Activated T-helper 1 cell treated with anti-CD3 and anti-CD28 coated beads, Interleukin-12 subunit alpha, Interleukin-12 subunit beta, Interleukin-2, Interleukin-4 antibody, amounts not matched to agents 30 ng/mL and 10 ng/mL and 1 ng/mL, durations not matched to agents 14 hours and 24 hours and 36 hours (primary cell): ENCODE measurements at regions of chr17 and their contacts with region 1.

Region 1: GRCh38 chr17:32349854-32350665 is at the start of gene ZNF207:
- DNase-seq: peak; percentile 94
- H3K4me3 Mint-ChIP-seq: peak within 1 kb of the TSS; percentile 99
- H3K27ac Mint-ChIP-seq: peak within 1 kb of the TSS; percentile 99
- H3K4me1 Mint-ChIP-seq: peaks cover 46% of the 10 kb centered on the region
- H3K27me3 Mint-ChIP-seq: no peaks in the 10 kb centered on the region
- total RNA-seq, gene ZNF207: 268 and 275 TPM in 2 replicates

Region 2: DNA sequence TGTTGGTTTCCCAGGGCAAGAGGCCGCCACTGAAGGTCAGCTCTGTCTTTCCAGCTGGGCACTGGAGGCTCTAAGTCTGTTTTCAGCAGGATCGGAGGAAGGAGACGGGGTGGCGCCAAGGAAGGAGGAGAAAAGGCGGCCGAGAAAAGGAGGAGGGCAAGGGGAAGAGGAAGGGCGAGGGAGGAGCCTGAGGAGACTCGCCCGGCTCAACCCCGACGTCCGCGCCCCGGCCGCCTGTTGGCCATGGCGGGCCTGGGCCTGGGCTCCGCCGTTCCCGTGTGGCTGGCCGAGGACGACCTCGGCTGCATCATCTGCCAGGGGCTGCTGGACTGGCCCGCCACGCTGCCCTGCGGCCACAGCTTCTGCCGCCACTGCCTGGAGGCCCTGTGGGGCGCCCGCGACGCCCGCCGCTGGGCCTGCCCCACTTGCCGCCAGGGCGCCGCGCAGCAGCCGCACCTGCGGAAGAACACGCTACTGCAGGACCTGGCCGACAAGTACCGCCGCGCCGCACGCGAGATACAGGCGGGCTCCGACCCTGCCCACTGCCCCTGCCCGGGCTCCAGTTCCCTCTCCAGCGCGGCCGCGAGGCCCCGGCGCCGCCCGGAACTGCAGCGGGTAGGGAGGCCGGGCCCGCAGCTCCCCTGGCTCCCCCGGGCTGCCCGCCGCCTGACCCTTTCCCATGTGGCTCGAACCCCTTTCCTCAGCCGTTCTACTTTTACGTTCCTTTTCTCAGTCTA is 1379.1 kb before region 1 on chr17 and contains the start of gene RNF135:
- intact Hi-C with region 1: loop called (anchors 10 kb)
- DNase-seq: peak; percentile 62
- H3K4me3 Mint-ChIP-seq: peak within 1 kb of the TSS; percentile 98
- H3K27ac Mint-ChIP-seq: peak within 1 kb of the TSS; percentile 96
- H3K4me1 Mint-ChIP-seq: peaks cover 22% of the 10 kb centered on the region
- H3K27me3 Mint-ChIP-seq: no peaks in the 10 kb centered on the region
- total RNA-seq, gene RNF135: 8.6 and 10.6 TPM in 2 replicates

Region 3: DNA sequence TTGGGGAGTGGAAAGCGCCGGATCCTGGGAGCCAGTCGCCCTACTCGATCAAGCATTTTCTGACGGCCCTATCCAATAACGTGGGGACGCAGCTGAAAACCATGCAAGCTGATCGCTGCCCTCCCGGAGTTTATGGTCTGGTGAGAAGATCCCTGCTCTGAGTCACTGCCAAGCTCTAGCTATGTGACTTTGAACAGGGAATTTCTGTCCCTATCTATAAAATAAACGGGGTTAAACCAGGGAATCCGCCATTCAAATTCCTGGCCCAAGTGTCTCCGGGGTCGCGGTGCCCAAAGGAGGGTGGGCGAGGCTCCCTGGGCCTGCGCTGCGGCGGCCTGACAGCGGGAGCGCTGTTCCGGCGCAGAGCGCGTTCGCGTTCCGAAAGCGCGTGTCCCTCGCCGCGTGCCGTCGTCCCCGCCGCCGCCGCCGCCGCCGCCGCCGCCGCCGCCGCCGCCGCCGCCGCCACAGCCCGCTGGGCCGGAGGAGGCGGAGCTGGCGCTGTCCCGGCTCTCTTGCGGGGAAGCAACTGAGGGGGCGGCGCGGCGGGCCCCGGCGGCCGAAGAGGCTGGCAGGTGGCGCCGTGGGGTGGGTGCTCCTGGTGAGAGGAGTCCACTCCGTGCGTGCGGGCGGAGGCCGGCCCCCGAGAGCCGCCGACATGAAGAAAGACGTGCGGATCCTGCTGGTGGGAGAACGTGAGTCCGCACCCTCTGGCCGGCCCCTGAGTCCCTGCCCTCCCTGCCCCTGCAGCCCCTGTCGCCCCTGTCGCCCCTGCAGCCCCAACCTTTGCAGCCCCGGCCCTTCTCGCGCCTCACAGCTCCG is 207.8 kb before region 1 on chr17 and contains the start of gene RHOT1:
- intact Hi-C with region 1: loop called (anchors 5 kb)
- DNase-seq: peak; percentile 76
- H3K4me3 Mint-ChIP-seq: peak within 1 kb of the TSS; percentile 96
- H3K27ac Mint-ChIP-seq: peak within 1 kb of the TSS; percentile 92
- H3K4me1 Mint-ChIP-seq: peaks cover 25% of the 10 kb centered on the region
- H3K27me3 Mint-ChIP-seq: no peaks in the 10 kb centered on the region
- total RNA-seq, gene RHOT1: 25.9 and 27.2 TPM in 2 replicates

Region 4: GRCh38 chr17:32191306-32191705 is 158.8 kb before region 1 on chr17:
- intact Hi-C with region 1: no loop called
- DNase-seq: no peak
- H3K4me3 Mint-ChIP-seq: no peak overlapping the region
- H3K27ac Mint-ChIP-seq: no peak overlapping the region
- H3K4me1 Mint-ChIP-seq: no peaks in the 10 kb centered on the region
- H3K27me3 Mint-ChIP-seq: no peaks in the 10 kb centered on the region

Region 5: DNA sequence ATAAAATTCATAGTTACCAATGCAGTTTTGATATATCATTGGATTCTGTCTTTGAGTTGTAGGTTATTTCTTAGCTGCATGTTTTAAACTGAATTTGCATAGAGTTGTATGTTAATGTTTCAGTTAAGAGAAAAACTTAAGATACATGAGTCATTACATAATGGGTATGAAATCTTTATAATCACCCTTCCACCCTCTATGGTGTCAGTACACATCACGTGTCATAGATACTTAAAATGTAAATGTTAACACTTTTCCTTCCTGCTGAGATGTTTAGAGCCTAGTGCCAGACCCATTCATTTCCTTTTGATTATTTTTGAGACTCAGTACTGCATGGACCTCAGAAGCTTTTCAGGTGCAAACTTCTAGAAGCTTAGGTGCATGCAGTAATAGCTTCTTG is 20.4 kb after region 1 on chr17:
- intact Hi-C with region 1: loop called (anchors 2 kb)
- DNase-seq: no peak
- H3K4me3 Mint-ChIP-seq: no peak overlapping the region
- H3K27ac Mint-ChIP-seq: no peak overlapping the region
- H3K4me1 Mint-ChIP-seq: peaks cover 23% of the 10 kb centered on the region
- H3K27me3 Mint-ChIP-seq: no peaks in the 10 kb centered on the region

Region 6: DNA sequence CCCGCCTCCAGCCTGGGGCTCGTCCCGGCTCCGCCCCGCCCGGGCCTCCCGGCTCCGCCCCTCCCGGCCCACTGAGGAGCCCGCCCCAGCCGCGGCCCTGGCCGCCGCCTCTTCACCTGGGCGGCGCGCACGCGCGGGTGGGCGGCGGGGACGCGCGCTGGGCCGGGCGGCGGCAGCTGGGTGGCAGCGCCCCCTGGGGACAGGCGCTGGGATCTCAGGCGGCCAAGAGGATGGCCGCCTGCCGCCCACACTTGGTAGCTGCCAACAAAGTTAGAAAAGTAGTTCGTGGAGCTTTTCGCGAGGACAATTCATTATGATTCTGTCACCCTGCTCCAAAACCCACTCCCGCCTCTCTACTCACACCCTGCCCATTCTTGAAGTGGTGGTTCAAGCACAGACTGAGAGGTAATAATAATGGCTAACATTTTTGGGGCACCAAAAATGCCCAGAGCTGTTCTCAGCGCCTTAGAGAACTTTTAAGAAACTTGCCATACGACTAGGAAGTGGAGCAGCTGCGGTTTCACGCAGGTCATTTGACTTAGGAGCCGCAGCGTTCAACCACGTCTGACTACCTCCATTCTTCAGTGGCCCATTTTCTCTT is 527.2 kb after region 1 on chr17:
- intact Hi-C with region 1: loop called (anchors 1 kb)
- DNase-seq: peak; percentile 92
- H3K4me3 Mint-ChIP-seq: peak overlapping the region; percentile 66
- H3K27ac Mint-ChIP-seq: peak overlapping the region; percentile 37
- H3K4me1 Mint-ChIP-seq: peaks cover 21% of the 10 kb centered on the region
- H3K27me3 Mint-ChIP-seq: peaks cover 18% of the 10 kb centered on the region